ENCODE measurements at regions of chr16 and their contacts with region 1.

Region 1: GRCh38 chr16:3029537-3030402 is 5.9 kb downstream of the THOC6 start:
- DNase-seq: no peak
- CTCF ChIP-seq: no peak

Region 2: DNA sequence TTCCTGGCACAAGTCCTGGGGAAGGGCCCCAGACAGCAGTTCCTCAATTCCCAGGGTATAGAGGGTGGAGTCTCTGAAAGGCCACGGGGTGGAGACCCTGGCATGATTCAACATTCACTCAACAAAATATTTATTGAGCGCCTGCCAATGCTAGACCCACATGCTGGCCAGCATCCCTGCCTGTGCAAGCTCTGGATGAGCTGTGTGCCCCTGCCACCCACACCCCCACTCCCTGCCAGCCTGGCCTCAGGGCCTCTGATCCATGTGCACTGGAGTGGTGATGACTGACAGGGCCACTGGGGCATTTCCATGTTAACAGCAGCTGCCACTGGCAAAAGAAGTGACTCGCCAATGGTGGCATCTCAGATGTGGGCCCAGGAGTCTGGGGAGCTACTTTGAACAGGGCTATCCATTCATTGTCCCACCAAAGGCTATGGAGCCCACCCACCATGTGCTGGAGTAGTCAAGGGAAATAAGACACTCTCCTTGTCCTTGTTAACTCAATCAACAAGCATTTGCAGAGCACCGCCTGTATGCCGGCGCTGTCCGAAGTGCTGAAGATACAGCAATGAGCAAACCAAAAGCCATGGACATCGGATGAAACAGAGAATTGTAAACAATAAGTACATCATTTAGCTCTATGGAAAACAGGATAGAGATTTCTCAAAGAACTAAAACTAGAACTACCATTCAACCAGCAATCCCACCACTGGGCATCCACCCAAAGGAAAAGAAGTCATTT is 168.8 kb before region 1 on chr16:
- CTCF ChIA-PET with region 1: no interaction called
- POLR2A ChIA-PET with region 1: no interaction called
- DNase-seq: no peak
- CTCF ChIP-seq: no peak

Region 3: GRCh38 chr16:2948807-2949738 is 80.7 kb before region 1 on chr16:
- CTCF ChIA-PET with region 1: no interaction called
- POLR2A ChIA-PET with region 1: no interaction called
- DNase-seq: no peak
- CTCF ChIP-seq: no peak

Region 4: GRCh38 chr16:3045357-3045728 is 15.6 kb after region 1 on chr16:
- CTCF ChIA-PET with region 1: interaction called, 140 read pairs
- POLR2A ChIA-PET with region 1: interaction called, 3 read pairs
- DNase-seq: no peak
- CTCF ChIP-seq: no peak

Region 5: DNA sequence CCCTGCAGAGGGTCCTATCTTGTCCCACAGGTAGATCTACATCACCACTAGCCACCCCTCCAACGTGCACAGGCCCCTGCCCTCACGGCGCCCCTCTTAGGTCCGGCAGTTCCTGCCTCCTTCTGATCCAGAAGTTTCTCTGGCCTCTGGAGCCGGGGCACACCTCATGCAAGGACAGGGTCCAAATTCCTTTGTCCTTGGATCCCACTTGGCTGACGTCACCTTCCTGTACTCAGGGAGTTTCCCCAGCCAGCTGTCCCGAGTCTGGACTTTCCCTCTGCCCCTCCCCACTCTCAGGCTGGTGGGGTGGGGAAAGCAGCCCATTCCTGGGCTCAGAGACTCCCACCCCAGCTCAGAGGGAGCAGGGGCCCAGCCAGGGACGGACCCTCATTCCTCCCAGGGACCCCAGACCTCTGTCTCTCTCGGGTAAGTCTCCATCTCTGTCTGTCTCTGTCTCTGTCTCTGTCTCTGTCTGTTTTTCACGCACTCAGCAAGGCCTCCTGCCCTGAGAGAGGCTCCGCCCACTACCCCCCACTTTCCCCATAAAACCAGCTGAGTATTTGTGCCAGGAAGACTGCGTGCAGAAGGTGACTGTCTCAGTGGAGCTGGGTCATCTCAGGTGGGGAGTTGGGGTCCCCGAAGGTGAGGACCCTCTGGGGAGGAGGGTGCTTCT is 35.4 kb after region 1 on chr16 and contains the start of gene IL32:
- CTCF ChIA-PET with region 1: interaction called, 75 read pairs
- POLR2A ChIA-PET with region 1: no interaction called
- DNase-seq: peak; percentile 72
- CTCF ChIP-seq: no peak

Region 6: GRCh38 chr16:3074860-3075522 is 45.2 kb after region 1 on chr16:
- CTCF ChIA-PET with region 1: interaction called, 22 read pairs
- POLR2A ChIA-PET with region 1: no interaction called
- DNase-seq: peak; percentile 65
- CTCF ChIP-seq: no peak

Region 7: DNA sequence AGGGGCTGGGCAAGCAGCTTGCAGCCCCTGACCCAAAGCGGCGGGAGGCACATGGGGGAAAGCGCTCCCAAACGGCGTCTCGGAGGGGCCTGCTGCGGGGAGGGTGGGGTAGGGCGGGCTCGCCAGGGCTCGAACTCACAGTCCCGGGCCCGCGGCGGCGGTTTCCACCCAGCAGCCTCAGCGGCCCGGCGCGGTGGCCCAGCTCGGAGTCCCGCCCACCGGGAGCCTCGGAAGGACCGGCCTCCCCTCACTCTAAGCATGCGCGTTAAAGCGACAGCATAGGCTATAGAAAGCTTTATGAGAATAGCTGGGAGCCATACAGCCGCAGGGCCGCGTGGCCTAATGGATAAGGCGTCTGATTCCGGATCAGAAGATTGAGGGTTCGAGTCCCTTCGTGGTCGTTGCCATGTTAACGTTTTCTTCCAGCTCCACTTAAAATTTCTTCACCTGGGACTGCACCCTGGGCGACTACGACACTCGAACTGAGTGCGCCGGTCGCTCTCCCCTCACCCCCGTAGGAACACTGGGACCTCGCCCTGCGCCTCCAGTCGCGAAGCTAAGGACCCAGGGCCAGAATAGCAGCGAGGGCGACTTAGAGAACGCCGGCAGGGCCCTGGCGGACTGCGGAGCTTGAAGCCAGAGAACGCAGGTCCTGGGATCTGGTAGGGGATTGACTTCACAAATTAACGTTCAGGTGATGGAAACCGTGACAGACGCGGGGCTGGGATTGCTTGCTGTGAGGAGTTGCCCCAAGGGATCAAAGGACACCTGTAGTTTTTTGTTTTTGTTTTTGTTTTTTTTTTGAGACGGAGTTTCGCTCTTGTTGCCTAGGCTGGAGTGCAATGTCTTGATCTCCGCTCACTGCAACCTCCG is 120.8 kb after region 1 on chr16:
- CTCF ChIA-PET with region 1: interaction called, 19 read pairs
- POLR2A ChIA-PET with region 1: no interaction called
- DNase-seq: peak; percentile 97
- CTCF ChIP-seq: no peak